ENCODE measurements at regions of chr9 and their contacts with region 1.

Region 1: GRCh38 chr9:71604197-71605063 is 163.9 kb downstream of the CEMIP2 start:
- DNase-seq: peak; percentile 32
- CTCF ChIP-seq: peak; percentile 67

Region 2: GRCh38 chr9:71353720-71354119 is 250.7 kb before region 1 on chr9:
- in situ Hi-C with region 1: no loop called
- DNase-seq: no peak
- CTCF ChIP-seq: no peak

Region 3: GRCh38 chr9:71768388-71769174 is 164.2 kb after region 1 on chr9 and contains the start of gene CEMIP2:
- in situ Hi-C with region 1: loop called (anchors 10 kb)
- DNase-seq: peak; percentile 90
- CTCF ChIP-seq: peak; percentile 73

Measured in GM13976 (cell line).